AG04449 (cell line): ENCODE measurements at regions of chr15 and their contacts with region 1.

Region 1: DNA sequence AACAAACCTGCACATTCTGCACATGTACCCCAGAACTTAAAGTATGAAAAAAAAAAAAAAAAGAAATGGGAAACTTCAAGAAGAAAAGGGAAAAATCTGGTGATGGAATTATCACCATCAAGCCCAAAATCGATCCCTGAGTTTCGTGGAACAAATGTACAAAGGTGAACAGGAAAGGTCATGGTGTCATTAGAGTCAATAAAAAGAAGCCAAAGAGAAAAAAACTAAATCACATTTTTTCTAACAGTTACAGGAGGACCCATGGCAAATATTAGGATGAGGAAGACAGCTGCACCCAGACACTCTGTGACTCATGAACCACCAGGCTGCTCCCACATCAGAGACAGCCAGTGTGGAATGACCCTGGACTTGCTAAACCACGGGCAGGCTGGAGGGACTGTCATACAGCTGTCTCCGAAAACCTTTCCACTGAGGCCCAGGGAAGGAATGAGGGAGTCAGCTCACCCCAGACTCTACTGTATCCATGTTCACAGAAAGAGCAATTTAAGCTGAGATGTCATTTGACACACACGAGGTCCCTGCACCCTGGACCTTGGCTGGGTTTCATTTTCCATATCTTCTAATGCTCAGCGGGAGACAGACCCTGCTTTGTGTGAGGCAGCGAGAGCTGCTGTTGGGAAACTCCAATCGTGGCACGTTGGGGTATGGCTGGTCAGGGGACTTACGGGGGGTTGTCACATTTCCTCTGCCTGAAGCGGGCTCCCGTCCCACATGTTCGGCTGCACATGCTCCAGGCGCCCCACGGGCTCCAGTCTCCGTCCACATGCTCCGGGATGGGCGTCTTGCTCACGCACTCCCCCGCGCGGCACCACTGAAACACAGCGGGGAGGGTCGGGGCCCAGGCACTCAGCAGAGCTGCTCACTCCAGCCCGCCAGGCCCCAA is 210.2 kb downstream of the ADAMTS17 start:
- DNase-seq: no peak
- H3K4me3 ChIP-seq: peak overlapping the region; percentile 33
- CTCF ChIP-seq: peak; percentile 37

Region 2: DNA sequence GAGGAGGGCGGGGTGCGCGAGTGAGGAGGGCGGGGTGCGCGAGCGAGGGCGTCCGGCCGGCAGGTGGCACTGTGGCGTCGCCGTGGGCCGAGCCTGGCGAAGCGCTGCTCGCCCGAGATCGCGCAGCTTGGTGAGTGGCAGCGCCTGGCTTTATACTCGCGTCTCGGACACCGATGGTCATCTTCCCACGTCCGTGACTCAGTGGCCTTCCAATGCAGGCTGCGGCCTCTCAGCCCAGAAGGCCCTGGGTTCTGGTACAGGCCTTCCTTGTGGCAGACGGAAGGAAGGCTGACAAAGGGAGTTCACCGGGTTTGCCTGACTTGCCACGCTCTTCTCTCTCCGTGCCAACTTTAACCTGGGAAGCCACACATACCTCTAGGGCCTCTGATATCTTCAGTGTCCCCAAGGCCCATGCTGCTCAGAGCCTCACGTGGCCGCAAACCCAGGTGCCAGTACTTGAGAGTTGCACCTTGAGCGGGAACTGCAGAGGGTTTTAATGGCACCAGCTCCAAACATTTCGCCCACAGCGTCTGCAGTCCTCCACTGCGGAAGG is 203.1 kb before region 1 on chr15:
- CTCF ChIA-PET with region 1: interaction called, 17 read pairs
- POLR2A ChIA-PET with region 1: no interaction called
- DNase-seq: no peak
- H3K4me3 ChIP-seq: peak overlapping the region; percentile 57
- CTCF ChIP-seq: peak; percentile 64

Region 3: GRCh38 chr15:100043015-100043641 is 88.4 kb before region 1 on chr15:
- CTCF ChIA-PET with region 1: no interaction called
- POLR2A ChIA-PET with region 1: no interaction called
- DNase-seq: no peak
- H3K4me3 ChIP-seq: no peak overlapping the region
- CTCF ChIP-seq: no peak